Aorta (tissue), 5 donors: ENCODE measurements at regions of chrX and their contacts with region 1.

Region 1: GRCh38 chrX:70096052-70096451 is 33.8 kb downstream of the OTUD6A start:
- DNase-seq: no peak
- ATAC-seq: no peak
- H3K4me3 ChIP-seq: no peak overlapping the region
- H3K27ac ChIP-seq: no peak overlapping the region
- H3K4me1 ChIP-seq: no peaks in the 10 kb centered on the region
- H3K27me3 ChIP-seq: no peaks in the 10 kb centered on the region

Region 2: GRCh38 chrX:69493193-69493592 is 602.9 kb before region 1 on chrX:
- intact Hi-C with region 1: loop called (anchors 5 kb)
- DNase-seq: no peak
- ATAC-seq: no peak
- H3K4me3 ChIP-seq: no peak overlapping the region
- H3K27ac ChIP-seq: no peak overlapping the region
- H3K4me1 ChIP-seq: no peaks in the 10 kb centered on the region
- H3K27me3 ChIP-seq: no peaks in the 10 kb centered on the region

Region 3: DNA sequence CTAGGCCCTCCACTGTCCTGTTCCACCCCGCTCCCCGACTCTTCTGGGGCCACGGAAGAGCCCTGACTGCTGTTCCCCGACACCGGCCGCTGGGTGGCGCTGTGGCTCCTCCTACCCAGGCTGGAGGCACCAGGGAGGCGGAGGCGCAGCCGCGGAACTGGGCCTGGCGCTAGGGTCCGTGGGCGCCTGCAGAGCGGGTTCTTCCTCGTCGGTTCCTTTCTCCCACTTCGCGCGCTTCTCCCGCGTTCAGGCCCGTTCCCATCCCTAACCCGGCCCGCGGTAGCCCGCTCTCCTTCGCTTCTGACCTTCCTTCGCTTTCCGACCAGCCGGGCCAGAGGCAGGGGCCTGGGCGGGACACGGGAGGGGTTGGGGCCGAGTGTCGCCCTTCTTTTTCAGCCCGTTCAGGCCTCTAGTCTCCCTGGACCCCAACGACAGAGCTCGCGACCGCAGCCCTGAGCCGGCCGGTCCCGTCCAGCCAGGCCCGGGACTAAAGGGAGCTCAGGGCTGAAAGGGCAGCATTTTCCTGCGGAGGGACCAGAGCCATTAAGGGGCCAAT is 557.7 kb before region 1 on chrX:
- intact Hi-C with region 1: loop called in 1 of 2 experiments (anchors 10 kb)
- DNase-seq: peak; percentile 84 to 93
- ATAC-seq: peak; percentile 89
- H3K4me3 ChIP-seq: no peak overlapping the region
- H3K27ac ChIP-seq: no peak overlapping the region
- H3K4me1 ChIP-seq: no peaks in the 10 kb centered on the region
- H3K27me3 ChIP-seq: no peaks in the 10 kb centered on the region

Region 4: GRCh38 chrX:70001269-70001668 is 94.8 kb before region 1 on chrX:
- intact Hi-C with region 1: no loop called
- DNase-seq: no peak
- ATAC-seq: no peak
- H3K4me3 ChIP-seq: no peak overlapping the region
- H3K27ac ChIP-seq: no peak overlapping the region
- H3K4me1 ChIP-seq: no peaks in the 10 kb centered on the region
- H3K27me3 ChIP-seq: no peaks in the 10 kb centered on the region

Region 5: DNA sequence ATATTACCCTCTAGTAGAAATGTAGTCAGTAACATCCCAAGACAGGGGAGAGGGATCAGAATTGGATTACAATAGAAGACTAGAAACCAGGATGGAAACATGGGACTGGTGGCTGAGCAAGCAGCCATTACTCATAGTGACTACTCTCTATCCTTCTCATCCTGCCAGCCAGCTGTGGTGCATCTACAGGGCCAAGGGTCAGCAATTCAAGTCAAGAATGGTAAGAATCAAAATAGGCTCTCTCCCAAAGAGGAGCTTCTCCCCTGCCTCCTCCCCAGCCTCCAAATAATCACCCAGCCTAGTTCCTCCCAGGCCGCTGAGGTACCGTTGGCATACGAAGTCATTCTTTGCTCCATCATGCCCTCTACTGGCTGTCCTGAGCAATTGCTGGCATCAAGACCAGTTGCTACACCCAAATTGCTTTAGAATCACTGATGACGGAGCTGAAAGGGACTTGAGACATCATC is 65.7 kb before region 1 on chrX:
- intact Hi-C with region 1: loop called in 1 of 2 experiments (anchors 5 kb)
- DNase-seq: no peak
- ATAC-seq: peak; percentile 47
- H3K4me3 ChIP-seq: no peak overlapping the region
- H3K27ac ChIP-seq: no peak overlapping the region
- H3K4me1 ChIP-seq: no peaks in the 10 kb centered on the region
- H3K27me3 ChIP-seq: no peaks in the 10 kb centered on the region

Region 6: GRCh38 chrX:70042399-70043371 is 53.4 kb before region 1 on chrX:
- intact Hi-C with region 1: no loop called
- DNase-seq: no peak
- ATAC-seq: no peak
- H3K4me3 ChIP-seq: no peak overlapping the region
- H3K27ac ChIP-seq: no peak overlapping the region
- H3K4me1 ChIP-seq: no peaks in the 10 kb centered on the region
- H3K27me3 ChIP-seq: no peaks in the 10 kb centered on the region